Activated naive CD4-positive, alpha-beta T cell treated with anti-CD3 and anti-CD28 coated beads for 36 hours (primary cell): ENCODE measurements at regions of chr22 and their contacts with region 1.

Region 1: GRCh38 chr22:21876486-21877176 is 9.2 kb upstream of the MAPK1 start:
- DNase-seq: peak; percentile 68
- H3K4me3 Mint-ChIP-seq: no peak overlapping the region
- H3K27ac Mint-ChIP-seq: peak overlapping the region; percentile 57
- H3K4me1 Mint-ChIP-seq: peaks cover 14% of the 10 kb centered on the region
- H3K27me3 Mint-ChIP-seq: no peaks in the 10 kb centered on the region

Region 2: DNA sequence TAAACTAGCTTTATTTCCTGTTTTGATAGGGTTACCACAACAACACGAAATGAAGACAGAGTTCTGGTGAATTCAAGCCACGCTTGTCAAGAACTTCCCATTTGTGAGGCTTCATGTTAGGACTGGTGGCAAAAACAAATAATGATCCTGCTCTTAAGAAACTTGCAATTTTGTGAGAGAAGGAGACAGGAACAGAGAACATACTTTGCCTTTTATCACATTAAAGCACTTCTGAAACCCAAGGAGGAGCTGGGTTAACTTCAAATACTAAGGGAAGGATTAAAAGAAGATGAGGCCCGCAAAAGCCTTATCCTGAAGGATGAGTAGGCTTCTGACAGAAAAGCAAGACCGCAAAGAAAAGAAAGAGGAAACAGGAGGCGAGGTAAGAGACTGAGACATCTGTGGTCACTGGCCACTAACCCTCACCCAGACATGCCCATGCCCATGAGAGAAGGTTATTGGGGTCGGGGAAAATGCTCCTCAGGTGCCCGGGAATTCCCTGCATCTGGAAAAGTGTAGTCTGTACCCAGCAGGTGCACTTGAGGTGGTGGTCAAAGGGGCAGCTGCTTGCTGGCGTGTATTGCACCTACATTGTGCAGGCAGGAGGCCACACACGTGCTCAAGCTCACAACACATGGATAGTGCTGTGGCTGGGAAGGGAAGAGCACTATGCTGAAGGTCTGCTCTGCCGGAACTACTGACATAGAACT is 59.7 kb before region 1 on chr22:
- CTCF ChIA-PET with region 1: interaction called, 3 read pairs
- intact Hi-C with region 1: loop called (anchors 1 kb)
- DNase-seq: peak; percentile 40
- H3K4me3 Mint-ChIP-seq: no peak overlapping the region
- H3K27ac Mint-ChIP-seq: peak overlapping the region; percentile 73
- H3K4me1 Mint-ChIP-seq: peaks cover 59% of the 10 kb centered on the region
- H3K27me3 Mint-ChIP-seq: no peaks in the 10 kb centered on the region

Region 3: DNA sequence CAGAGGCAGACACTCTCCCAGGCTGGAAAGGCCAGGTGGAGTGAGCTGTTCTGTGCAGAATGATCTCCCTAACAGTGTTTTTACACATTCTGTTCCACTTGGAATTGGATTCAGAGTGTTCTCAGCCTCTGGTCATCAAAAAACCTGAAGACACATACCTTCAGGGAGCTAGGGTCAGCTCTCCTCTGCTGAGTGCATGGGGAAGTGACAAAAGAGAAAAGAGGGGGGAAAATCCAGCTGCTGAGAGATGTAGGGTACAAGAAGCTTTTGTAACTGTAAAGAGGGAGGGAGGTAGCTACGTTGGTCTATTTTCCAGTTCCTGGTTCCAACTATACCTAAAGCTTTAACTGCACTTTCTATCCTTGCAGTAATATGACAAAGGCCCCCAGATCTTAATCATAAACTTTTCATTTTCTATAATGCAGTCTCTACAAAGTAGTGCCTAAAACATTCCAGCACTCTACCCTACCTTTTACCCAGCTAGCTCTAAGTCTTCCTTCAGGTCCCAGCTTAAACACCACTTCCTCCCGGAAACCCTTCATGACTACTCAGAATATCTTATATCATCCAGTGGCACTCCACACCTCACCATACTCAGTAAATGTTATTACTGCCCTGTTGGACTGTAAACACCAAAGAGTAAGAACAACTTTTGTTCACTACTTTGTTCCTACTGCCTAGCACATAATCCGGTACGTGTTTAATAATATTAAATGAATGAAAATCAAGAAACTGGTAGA is 18.4 kb before region 1 on chr22:
- CTCF ChIA-PET with region 1: interaction called, 3 read pairs
- intact Hi-C with region 1: loop called (anchors 2 kb)
- DNase-seq: no peak
- H3K4me3 Mint-ChIP-seq: no peak overlapping the region
- H3K27ac Mint-ChIP-seq: no peak overlapping the region
- H3K4me1 Mint-ChIP-seq: peaks cover 84% of the 10 kb centered on the region
- H3K27me3 Mint-ChIP-seq: no peaks in the 10 kb centered on the region